ENCODE measurements at regions of chr9 and their contacts with region 1.

Region 1: DNA sequence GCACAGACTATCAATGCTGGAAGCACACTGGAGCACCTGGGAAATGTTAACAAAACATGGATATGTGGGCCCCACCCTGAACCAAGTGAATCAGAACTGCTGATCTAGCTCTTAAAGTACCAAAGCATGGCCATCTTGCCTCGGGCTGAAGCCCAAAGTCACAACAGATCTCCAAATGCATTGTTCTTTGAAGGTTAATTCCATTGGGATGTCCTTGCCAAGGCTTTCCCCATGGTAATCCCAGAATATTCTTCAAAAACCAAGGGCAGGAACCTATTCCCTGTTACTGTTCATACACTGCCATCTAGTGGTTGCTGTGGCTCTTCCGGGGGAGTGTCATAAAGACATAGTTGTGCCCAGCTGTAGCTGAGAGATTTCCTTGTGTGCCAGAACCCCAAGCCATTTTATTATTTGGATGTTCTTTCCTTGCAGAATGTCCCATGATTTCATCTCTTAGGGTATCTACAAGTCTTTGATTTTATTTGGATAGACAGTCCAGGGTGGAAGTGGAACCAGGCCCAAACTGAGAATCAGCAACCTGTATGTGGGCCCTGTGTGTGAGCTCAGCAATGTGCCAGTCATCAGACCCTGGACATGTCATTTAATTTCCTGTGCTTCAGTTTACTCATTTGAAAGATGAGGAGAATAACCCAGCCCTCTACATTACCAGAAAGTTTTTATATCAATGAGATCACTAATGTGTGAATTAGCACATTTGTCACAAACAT is 290.0 kb downstream of the ACTL7B start:
- DNase-seq: peak; percentile 65
- ATAC-seq: no peak
- H3K4me3 ChIP-seq: no peak overlapping the region
- H3K4me3 Mint-ChIP-seq: no peak overlapping the region
- H3K27ac ChIP-seq: no peak overlapping the region
- H3K27ac Mint-ChIP-seq: no peak overlapping the region
- H3K4me1 ChIP-seq: no peaks in the 10 kb centered on the region
- H3K4me1 Mint-ChIP-seq: no peaks in the 10 kb centered on the region
- H3K27me3 ChIP-seq: no peaks in the 10 kb centered on the region
- H3K27me3 Mint-ChIP-seq: peaks cover 6% of the 10 kb centered on the region
- CTCF ChIP-seq: peak; percentile 85

Region 2: GRCh38 chr9:107137495-107138202 is 1428.2 kb before region 1 on chr9:
- CTCF ChIA-PET with region 1: interaction called, 5 read pairs
- POLR2A ChIA-PET with region 1: no interaction called
- intact Hi-C with region 1: loop called (anchors 5 kb)
- DNase-seq: peak; percentile 20
- ATAC-seq: no peak
- H3K4me3 ChIP-seq: no peak overlapping the region
- H3K4me3 Mint-ChIP-seq: no peak overlapping the region
- H3K27ac ChIP-seq: no peak overlapping the region
- H3K27ac Mint-ChIP-seq: no peak overlapping the region
- H3K4me1 ChIP-seq: no peaks in the 10 kb centered on the region
- H3K4me1 Mint-ChIP-seq: no peaks in the 10 kb centered on the region
- H3K27me3 ChIP-seq: peaks cover 0 to 2% (median under 1%) of the 10 kb centered on the region in 4 experiments
- H3K27me3 Mint-ChIP-seq: peaks cover 41% of the 10 kb centered on the region
- CTCF ChIP-seq: peak; percentile 65

Region 3: DNA sequence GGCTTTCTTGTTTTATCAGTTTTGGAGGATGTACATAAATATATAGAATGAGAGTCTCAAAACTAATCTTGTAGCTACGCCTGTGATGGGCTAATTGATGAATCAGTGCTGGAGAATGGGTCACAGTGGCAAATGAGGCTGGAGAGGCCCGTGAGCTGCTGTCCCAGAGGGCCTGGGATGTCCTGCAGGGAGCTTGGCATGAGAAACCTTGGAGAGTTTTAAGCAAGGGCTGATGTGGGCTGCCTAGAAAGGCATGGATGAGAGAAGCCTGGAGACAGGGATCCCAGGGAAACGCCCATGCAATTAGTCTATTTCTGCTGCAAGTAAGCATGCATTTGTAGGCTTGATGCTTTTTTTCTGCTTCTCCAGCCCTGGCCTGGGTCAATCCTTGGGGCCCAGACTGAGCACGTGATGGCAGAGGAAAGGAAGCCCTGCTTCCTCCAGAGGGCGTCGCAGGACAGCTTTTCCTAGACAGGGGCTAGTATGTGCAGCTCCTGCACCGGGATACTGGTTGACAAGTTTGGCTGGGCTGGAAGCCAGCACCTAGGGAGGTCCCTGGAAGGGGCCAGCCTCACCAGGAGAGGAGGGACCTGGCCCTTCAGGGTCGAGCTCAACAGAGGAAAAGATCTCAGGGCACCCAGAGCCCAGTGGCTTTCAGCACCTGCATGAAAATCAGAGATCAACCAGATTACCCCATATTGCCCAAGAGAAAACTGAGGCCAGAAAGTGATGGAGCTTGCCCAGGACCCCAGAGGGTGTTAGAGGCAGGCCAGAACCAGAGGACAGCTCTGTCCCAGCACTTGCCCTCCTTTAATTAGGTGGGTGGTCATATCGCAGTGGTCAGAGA is 1143.6 kb before region 1 on chr9:
- CTCF ChIA-PET with region 1: interaction called, 19 read pairs
- POLR2A ChIA-PET with region 1: no interaction called
- intact Hi-C with region 1: no loop called
- DNase-seq: peak; percentile 30
- ATAC-seq: no peak
- H3K4me3 ChIP-seq: no peak overlapping the region
- H3K4me3 Mint-ChIP-seq: no peak overlapping the region
- H3K27ac ChIP-seq: no peak overlapping the region
- H3K27ac Mint-ChIP-seq: no peak overlapping the region
- H3K4me1 ChIP-seq: peaks cover 3 to 8% of the 10 kb centered on the region in 2 donors
- H3K4me1 Mint-ChIP-seq: peaks cover 9% of the 10 kb centered on the region
- H3K27me3 ChIP-seq: peaks cover 0 to 11% (median 5%) of the 10 kb centered on the region in 4 experiments
- H3K27me3 Mint-ChIP-seq: peaks cover 30% of the 10 kb centered on the region
- CTCF ChIP-seq: no peak

Region 4: GRCh38 chr9:107465467-107466451 is 1100.1 kb before region 1 on chr9:
- CTCF ChIA-PET with region 1: interaction called, 38 read pairs
- POLR2A ChIA-PET with region 1: no interaction called
- intact Hi-C with region 1: loop called (anchors 1 kb)
- DNase-seq: peak; percentile 64
- ATAC-seq: peak; percentile 84
- H3K4me3 ChIP-seq: peak overlapping the region; percentile 25 to 59 (median 47)
- H3K4me3 Mint-ChIP-seq: peak overlapping the region; percentile 80
- H3K27ac ChIP-seq: no peak overlapping the region
- H3K27ac Mint-ChIP-seq: no peak overlapping the region
- H3K4me1 ChIP-seq: peaks cover 13 to 15% of the 10 kb centered on the region in 2 donors
- H3K4me1 Mint-ChIP-seq: peaks cover 13% of the 10 kb centered on the region
- H3K27me3 ChIP-seq: peaks cover 0 to 25% (median 17%) of the 10 kb centered on the region in 4 experiments
- H3K27me3 Mint-ChIP-seq: peaks cover 39% of the 10 kb centered on the region
- CTCF ChIP-seq: peak; percentile 78

Region 5: GRCh38 chr9:107484117-107484723 is 1081.6 kb before region 1 on chr9:
- CTCF ChIA-PET with region 1: interaction called, 17 read pairs
- POLR2A ChIA-PET with region 1: no interaction called
- intact Hi-C with region 1: no loop called
- DNase-seq: peak; percentile 65
- ATAC-seq: no peak
- H3K4me3 ChIP-seq: no peak overlapping the region
- H3K4me3 Mint-ChIP-seq: no peak overlapping the region
- H3K27ac ChIP-seq: no peak overlapping the region
- H3K27ac Mint-ChIP-seq: no peak overlapping the region
- H3K4me1 ChIP-seq: peaks cover 17 to 23% of the 10 kb centered on the region in 2 donors
- H3K4me1 Mint-ChIP-seq: peaks cover 9% of the 10 kb centered on the region
- H3K27me3 ChIP-seq: peaks cover 0 to 27% (median 12%) of the 10 kb centered on the region in 4 experiments
- H3K27me3 Mint-ChIP-seq: peaks cover 22% of the 10 kb centered on the region
- CTCF ChIP-seq: peak; percentile 62

Region 6: DNA sequence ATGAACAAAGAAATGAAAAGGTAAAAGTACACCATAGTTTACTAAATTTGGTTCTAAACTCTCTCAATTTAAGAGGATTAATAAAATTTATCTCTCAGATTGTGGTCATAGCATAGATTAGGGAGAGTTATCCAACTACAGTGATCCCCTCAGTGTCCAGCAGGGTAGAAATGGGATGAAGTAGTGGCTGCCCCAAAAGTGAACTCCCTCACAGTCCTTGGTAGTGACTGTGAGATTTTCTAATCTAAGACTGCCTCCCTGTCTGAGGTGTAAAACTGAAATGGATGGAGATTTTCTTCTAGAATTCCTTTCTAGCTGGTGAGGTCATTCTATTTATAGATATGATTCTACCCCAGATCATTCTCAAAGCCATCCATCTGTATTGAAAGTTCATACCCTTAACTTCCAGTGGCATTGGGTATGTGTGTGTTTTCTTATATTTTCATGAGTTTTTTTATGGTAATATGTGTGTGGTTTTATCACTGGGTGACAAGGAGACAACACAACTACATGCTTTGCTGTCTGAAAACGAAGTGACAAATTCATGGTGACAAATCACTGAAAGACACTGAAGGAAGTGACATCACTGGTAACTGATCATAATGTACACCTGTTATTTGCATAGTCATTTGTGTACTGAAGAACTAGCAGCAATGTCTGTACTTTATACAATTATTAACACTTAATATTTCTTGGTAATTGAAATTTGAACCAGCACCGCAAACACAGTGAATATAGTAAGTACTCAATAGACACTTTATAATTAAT is 165.3 kb before region 1 on chr9:
- CTCF ChIA-PET with region 1: no interaction called
- POLR2A ChIA-PET with region 1: no interaction called
- intact Hi-C with region 1: no loop called
- DNase-seq: no peak
- ATAC-seq: no peak
- H3K4me3 ChIP-seq: no peak overlapping the region
- H3K4me3 Mint-ChIP-seq: no peak overlapping the region
- H3K27ac ChIP-seq: no peak overlapping the region
- H3K27ac Mint-ChIP-seq: no peak overlapping the region
- H3K4me1 ChIP-seq: no peaks in the 10 kb centered on the region
- H3K4me1 Mint-ChIP-seq: no peaks in the 10 kb centered on the region
- H3K27me3 ChIP-seq: no peaks in the 10 kb centered on the region
- H3K27me3 Mint-ChIP-seq: peaks cover 2% of the 10 kb centered on the region
- CTCF ChIP-seq: no peak

Region 7: GRCh38 chr9:108554831-108555230 is 11.0 kb before region 1 on chr9:
- CTCF ChIA-PET with region 1: interaction called, 14 read pairs
- POLR2A ChIA-PET with region 1: no interaction called
- intact Hi-C with region 1: no loop called
- DNase-seq: no peak
- ATAC-seq: no peak
- H3K4me3 ChIP-seq: no peak overlapping the region
- H3K4me3 Mint-ChIP-seq: no peak overlapping the region
- H3K27ac ChIP-seq: no peak overlapping the region
- H3K27ac Mint-ChIP-seq: no peak overlapping the region
- H3K4me1 ChIP-seq: no peaks in the 10 kb centered on the region
- H3K4me1 Mint-ChIP-seq: no peaks in the 10 kb centered on the region
- H3K27me3 ChIP-seq: peaks cover 0 to 4% (median 0%) of the 10 kb centered on the region in 4 experiments
- H3K27me3 Mint-ChIP-seq: no peaks in the 10 kb centered on the region
- CTCF ChIP-seq: no peak

Region 8: DNA sequence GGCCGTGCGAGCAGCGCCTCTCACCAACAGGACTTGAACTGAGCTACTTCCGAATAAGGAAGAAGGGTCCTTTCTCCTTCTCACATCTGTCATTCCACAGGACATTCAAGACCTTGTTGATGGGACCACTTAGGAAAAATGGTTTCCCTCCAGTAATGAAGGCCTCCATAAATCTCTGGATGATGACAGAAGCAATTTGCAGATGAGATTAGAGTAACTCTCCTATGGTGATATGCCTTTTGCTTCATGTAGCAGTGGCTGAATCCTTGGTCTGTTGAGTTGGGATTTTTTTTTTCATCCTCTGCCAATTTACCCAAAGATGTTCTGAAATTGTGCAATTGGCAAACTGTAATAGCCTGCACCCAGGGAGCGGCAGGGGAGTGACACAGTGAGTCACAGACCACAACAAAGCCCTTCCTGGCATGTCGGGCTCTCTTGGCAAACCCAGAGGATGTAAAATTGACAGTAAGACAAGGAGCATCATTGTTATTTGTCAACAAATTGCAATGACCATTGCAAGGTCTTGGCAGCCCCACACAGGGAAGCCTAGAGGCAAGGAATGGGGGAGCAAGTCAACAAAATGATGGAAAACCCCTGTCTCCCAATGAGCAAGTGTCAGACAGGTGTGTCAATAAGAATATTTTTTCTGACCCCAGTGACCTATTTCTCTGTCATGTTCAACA is 14.1 kb after region 1 on chr9:
- CTCF ChIA-PET with region 1: interaction called, 13 read pairs
- POLR2A ChIA-PET with region 1: no interaction called
- intact Hi-C with region 1: no loop called
- DNase-seq: no peak
- ATAC-seq: no peak
- H3K4me3 ChIP-seq: no peak overlapping the region
- H3K4me3 Mint-ChIP-seq: no peak overlapping the region
- H3K27ac ChIP-seq: no peak overlapping the region
- H3K27ac Mint-ChIP-seq: no peak overlapping the region
- H3K4me1 ChIP-seq: no peaks in the 10 kb centered on the region
- H3K4me1 Mint-ChIP-seq: no peaks in the 10 kb centered on the region
- H3K27me3 ChIP-seq: peaks cover 0 to 3% (median 0%) of the 10 kb centered on the region in 4 experiments
- H3K27me3 Mint-ChIP-seq: peaks cover 4% of the 10 kb centered on the region
- CTCF ChIP-seq: no peak

Region 9: GRCh38 chr9:108834959-108835696 is 269.3 kb after region 1 on chr9:
- CTCF ChIA-PET with region 1: no interaction called
- POLR2A ChIA-PET with region 1: no interaction called
- intact Hi-C with region 1: no loop called
- DNase-seq: no peak
- ATAC-seq: peak; percentile 28
- H3K4me3 ChIP-seq: no peak overlapping the region
- H3K4me3 Mint-ChIP-seq: peak overlapping the region; percentile 40
- H3K27ac ChIP-seq: no peak overlapping the region
- H3K27ac Mint-ChIP-seq: no peak overlapping the region
- H3K4me1 ChIP-seq: peaks cover 21 to 23% of the 10 kb centered on the region in 2 donors
- H3K4me1 Mint-ChIP-seq: peaks cover 24% of the 10 kb centered on the region
- H3K27me3 ChIP-seq: no peaks in the 10 kb centered on the region
- H3K27me3 Mint-ChIP-seq: peaks cover 5% of the 10 kb centered on the region
- CTCF ChIP-seq: no peak

Measured in B cell (primary cell).